Activated T-helper 1 cell treated with anti-CD3 and anti-CD28 coated beads, Interleukin-12 subunit alpha, Interleukin-12 subunit beta, Interleukin-2, Interleukin-4 antibody, amounts not matched to agents 30 ng/mL and 10 ng/mL and 1 ng/mL, durations not matched to agents 14 hours and 24 hours and 36 hours (primary cell): ENCODE measurements at regions of chr11 and their contacts with region 1.

Region 1: GRCh38 chr11:4947505-4947904 is at the start of gene OR51A4:
- DNase-seq: no peak
- H3K4me3 Mint-ChIP-seq: no peak within 1 kb of the TSS
- H3K27ac Mint-ChIP-seq: no peak within 1 kb of the TSS
- H3K4me1 Mint-ChIP-seq: no peaks in the 10 kb centered on the region
- H3K27me3 Mint-ChIP-seq: no peaks in the 10 kb centered on the region
- total RNA-seq, gene OR51A4: not detected in 2 replicates

Region 2: DNA sequence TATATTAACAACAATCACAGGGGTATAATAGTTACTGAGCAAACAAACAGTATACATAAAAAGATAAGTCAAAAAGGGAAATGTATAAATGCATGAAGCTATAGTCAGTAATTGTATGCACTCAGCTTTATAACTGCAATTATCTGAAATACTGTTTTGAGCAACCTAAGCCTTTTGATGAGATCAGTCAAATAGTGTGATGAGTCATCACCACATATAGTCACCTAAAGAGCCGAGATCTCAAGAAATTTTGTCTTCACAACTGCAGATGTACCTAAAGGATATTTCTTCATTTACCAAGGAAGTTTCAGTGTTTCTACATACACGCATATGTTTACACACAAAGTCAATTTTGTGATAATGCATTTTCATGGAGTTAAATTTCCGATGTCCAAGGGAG is 13.4 kb after region 1 on chr11:
- intact Hi-C with region 1: loop called (anchors 1 kb)
- DNase-seq: no peak
- H3K4me3 Mint-ChIP-seq: no peak overlapping the region
- H3K27ac Mint-ChIP-seq: no peak overlapping the region
- H3K4me1 Mint-ChIP-seq: no peaks in the 10 kb centered on the region
- H3K27me3 Mint-ChIP-seq: no peaks in the 10 kb centered on the region

Region 3: GRCh38 chr11:5081405-5081804 is 133.9 kb after region 1 on chr11:
- intact Hi-C with region 1: no loop called
- DNase-seq: no peak
- H3K4me3 Mint-ChIP-seq: no peak overlapping the region
- H3K27ac Mint-ChIP-seq: no peak overlapping the region
- H3K4me1 Mint-ChIP-seq: no peaks in the 10 kb centered on the region
- H3K27me3 Mint-ChIP-seq: no peaks in the 10 kb centered on the region